HepG2 (cell line): ENCODE measurements at regions of chr21 and their contacts with region 1.

Region 1: GRCh38 chr21:43916691-43917514 is 51.9 kb downstream of the AGPAT3 start:
- DNase-seq: no peak
- ATAC-seq: no peak
- H3K4me3 ChIP-seq: no peak overlapping the region
- H3K27ac ChIP-seq: no peak overlapping the region
- H3K4me1 ChIP-seq: peaks cover 40% of the 10 kb centered on the region
- H3K27me3 ChIP-seq: no peaks in the 10 kb centered on the region
- CTCF ChIP-seq: no peak
- EP300 ChIP-seq: no peak
- POLR2A ChIP-seq: no peak
- RAD21 ChIP-seq: no peak

Region 2: DNA sequence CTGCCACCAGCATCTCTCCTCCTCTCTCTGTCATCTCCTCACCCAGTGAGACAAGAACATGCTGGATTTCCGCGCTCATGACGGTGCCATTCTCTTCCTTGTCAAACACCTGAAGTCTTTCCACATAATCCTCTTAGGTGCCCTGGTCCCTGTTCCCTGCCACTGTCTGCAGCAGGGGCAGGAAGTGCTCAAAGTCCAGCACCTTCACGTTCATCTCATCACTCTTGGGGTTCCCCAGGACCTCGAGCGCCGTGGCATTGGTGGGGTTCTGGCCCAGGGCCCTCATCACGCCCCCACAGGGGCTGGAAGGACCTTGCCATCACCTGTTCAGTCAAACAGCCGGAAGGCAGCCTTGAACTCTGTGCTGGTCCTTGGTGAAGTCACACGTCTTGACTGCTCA is 60.9 kb before region 1 on chr21:
- CTCF ChIA-PET with region 1: no interaction called
- POLR2A ChIA-PET with region 1: interaction called, 3 read pairs
- in situ Hi-C with region 1: no loop called
- intact Hi-C with region 1: loop called (anchors 2 kb)
- DNase-seq: no peak
- ATAC-seq: no peak
- H3K4me3 ChIP-seq: no peak overlapping the region
- H3K27ac ChIP-seq: no peak overlapping the region
- H3K4me1 ChIP-seq: peaks cover 65% of the 10 kb centered on the region
- H3K27me3 ChIP-seq: peaks cover 9 to 33% of the 10 kb centered on the region in 2 experiments
- CTCF ChIP-seq: no peak
- EP300 ChIP-seq: no peak
- POLR2A ChIP-seq: no peak
- RAD21 ChIP-seq: no peak